Endothelial cell of umbilical vein (primary cell): ENCODE measurements at regions of chr12 and their contacts with region 1.

Region 1: GRCh38 chr12:53675651-53676453 is at the start of gene ATP5MC2:
- DNase-seq: peak; percentile 100
- H3K4me3 ChIP-seq: peak within 1 kb of the TSS; percentile 55 to 86 (median 60)
- H3K27ac ChIP-seq: peak within 1 kb of the TSS; percentile 56
- H3K4me1 ChIP-seq: peaks cover 26% of the 10 kb centered on the region
- H3K27me3 ChIP-seq: no peaks in the 10 kb centered on the region
- CTCF ChIP-seq: peak; percentile 99 to 100
- POLR2A ChIP-seq: peak; percentile 94
- total RNA-seq, gene ATP5MC2: 375 and 402 TPM in 2 replicates

Region 2: DNA sequence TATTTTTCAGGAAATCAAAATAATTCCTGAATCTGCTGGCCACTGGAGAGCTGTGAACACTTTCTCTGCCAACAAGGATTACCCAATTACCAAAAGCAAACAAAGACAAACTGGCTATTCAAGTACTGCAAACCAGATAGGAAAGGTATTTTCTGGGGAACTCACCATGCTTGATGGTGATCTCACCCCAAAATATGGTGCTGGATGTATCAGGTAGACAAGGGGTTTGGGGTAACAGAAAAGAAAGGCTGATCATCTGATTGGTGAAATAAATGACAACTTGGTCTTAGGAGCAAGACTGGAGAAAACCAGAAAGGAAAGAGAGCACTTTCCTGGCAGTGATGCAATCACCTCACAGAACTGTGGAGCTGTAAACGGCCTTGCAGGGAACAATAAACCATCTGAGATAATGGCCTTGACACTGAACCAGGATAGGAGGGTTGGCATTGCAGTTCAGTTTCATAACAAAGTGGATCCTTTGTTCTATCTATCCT is 137.6 kb before region 1 on chr12:
- CTCF ChIA-PET with region 1: interaction called, 213 read pairs
- POLR2A ChIA-PET with region 1: interaction called, 3 read pairs
- dilution Hi-C with region 1: no loop called
- intact Hi-C with region 1: loop called (anchors 1 kb)
- DNase-seq: peak; percentile 50
- H3K4me3 ChIP-seq: no peak overlapping the region
- H3K27ac ChIP-seq: no peak overlapping the region
- H3K4me1 ChIP-seq: no peaks in the 10 kb centered on the region
- H3K27me3 ChIP-seq: no peaks in the 10 kb centered on the region
- CTCF ChIP-seq: no peak
- POLR2A ChIP-seq: no peak

Region 3: DNA sequence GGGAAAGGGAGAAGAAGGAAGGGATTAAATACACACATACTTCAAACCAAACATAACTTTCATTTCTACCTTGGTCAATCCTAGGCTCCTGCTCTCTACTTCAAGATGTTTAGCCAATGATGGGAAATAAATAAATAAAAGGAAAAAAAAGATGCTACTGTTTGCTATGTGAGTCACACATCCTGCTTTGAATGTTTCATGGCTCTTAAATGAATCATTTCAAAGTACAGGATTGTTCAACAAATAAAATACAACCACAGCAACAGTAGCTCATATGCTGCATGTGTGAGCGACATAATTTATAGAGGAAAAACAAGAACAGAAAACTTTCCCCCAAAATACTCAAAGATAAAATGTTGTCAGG is 114.3 kb before region 1 on chr12:
- CTCF ChIA-PET with region 1: interaction called, 11 read pairs
- POLR2A ChIA-PET with region 1: no interaction called
- dilution Hi-C with region 1: no loop called
- intact Hi-C with region 1: loop called (anchors 1 kb)
- DNase-seq: peak; percentile 93
- H3K4me3 ChIP-seq: peak overlapping the region in 1 of 3 experiments; percentile 19
- H3K27ac ChIP-seq: peak overlapping the region; percentile 96
- H3K4me1 ChIP-seq: peaks cover 28% of the 10 kb centered on the region
- H3K27me3 ChIP-seq: no peaks in the 10 kb centered on the region
- CTCF ChIP-seq: no peak
- POLR2A ChIP-seq: no peak

Region 4: GRCh38 chr12:53625946-53626701 is 49.7 kb before region 1 on chr12 and contains the start of gene ATF7:
- CTCF ChIA-PET with region 1: interaction called, 28 read pairs
- POLR2A ChIA-PET with region 1: interaction called, 3 read pairs
- dilution Hi-C with region 1: no loop called
- intact Hi-C with region 1: loop called (anchors 1 kb)
- DNase-seq: peak; percentile 99
- H3K4me3 ChIP-seq: peak within 1 kb of the TSS; percentile 61 to 97 (median 87)
- H3K27ac ChIP-seq: peak within 1 kb of the TSS; percentile 86
- H3K4me1 ChIP-seq: peaks cover 29% of the 10 kb centered on the region
- H3K27me3 ChIP-seq: no peaks in the 10 kb centered on the region
- CTCF ChIP-seq: no peak
- POLR2A ChIP-seq: no peak
- total RNA-seq, gene ATF7: 56.9 and 68.5 TPM in 2 replicates

Region 5: DNA sequence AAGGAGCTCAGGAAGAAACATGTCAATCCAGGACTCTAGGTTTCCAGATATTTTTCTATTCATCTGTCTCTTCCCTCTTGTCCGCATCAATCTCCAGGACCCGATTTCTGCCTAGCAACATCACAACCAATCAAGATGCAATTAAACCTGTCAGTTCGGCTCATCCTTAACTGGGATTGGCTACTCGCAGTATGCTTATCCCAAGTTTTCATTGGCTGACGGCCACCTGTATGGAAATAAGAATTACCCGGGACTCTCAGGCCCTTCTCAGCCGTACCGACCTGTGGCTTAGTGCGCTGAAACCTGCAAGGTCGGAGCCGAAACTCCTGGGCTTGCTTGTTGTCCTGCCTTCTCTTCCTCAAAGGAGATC is 20.4 kb after region 1 on chr12:
- CTCF ChIA-PET with region 1: interaction called, 5 read pairs
- POLR2A ChIA-PET with region 1: no interaction called
- dilution Hi-C with region 1: no loop called
- intact Hi-C with region 1: loop called (anchors 1 kb)
- DNase-seq: peak; percentile 89
- H3K4me3 ChIP-seq: no peak overlapping the region
- H3K27ac ChIP-seq: no peak overlapping the region
- H3K4me1 ChIP-seq: peaks cover 8% of the 10 kb centered on the region
- H3K27me3 ChIP-seq: peaks cover 33 to 59% of the 10 kb centered on the region in 2 experiments
- CTCF ChIP-seq: no peak
- POLR2A ChIP-seq: no peak